ENCODE measurements at regions of chr15 and their contacts with region 1.

Region 1: GRCh38 chr15:40506964-40507571 is 36.3 kb downstream of the CHST14 start:
- DNase-seq: peak; percentile 70
- ATAC-seq: peak; percentile 41
- H3K4me3 ChIP-seq: peak overlapping the region in 3 of 5 experiments; percentile 25 to 34 (median 34)
- H3K4me3 Mint-ChIP-seq: peak overlapping the region; percentile 44
- H3K27ac ChIP-seq: no peak overlapping the region
- H3K27ac Mint-ChIP-seq: no peak overlapping the region
- H3K4me1 ChIP-seq: peaks cover 24 to 25% of the 10 kb centered on the region in 2 donors
- H3K4me1 Mint-ChIP-seq: peaks cover 27% of the 10 kb centered on the region
- H3K27me3 ChIP-seq: peaks cover 0 to 20% (median 10%) of the 10 kb centered on the region in 4 experiments
- H3K27me3 Mint-ChIP-seq: peaks cover 39% of the 10 kb centered on the region
- CTCF ChIP-seq: peak; percentile 68

Region 2: GRCh38 chr15:40470423-40471104 is 36.5 kb before region 1 on chr15 and contains the start of gene CHST14:
- CTCF ChIA-PET with region 1: no interaction called
- POLR2A ChIA-PET with region 1: no interaction called
- intact Hi-C with region 1: loop called (anchors 2 kb)
- DNase-seq: peak; percentile 69
- ATAC-seq: peak; percentile 87
- H3K4me3 ChIP-seq: peak within 1 kb of the TSS; percentile 53 to 84 (median 79)
- H3K4me3 Mint-ChIP-seq: peak within 1 kb of the TSS; percentile 94
- H3K27ac ChIP-seq: peak within 1 kb of the TSS; percentile 73 to 76
- H3K27ac Mint-ChIP-seq: peak within 1 kb of the TSS; percentile 95
- H3K4me1 ChIP-seq: peaks cover 6 to 18% of the 10 kb centered on the region in 2 donors
- H3K4me1 Mint-ChIP-seq: peaks cover 15% of the 10 kb centered on the region
- H3K27me3 ChIP-seq: no peaks in the 10 kb centered on the region
- H3K27me3 Mint-ChIP-seq: no peaks in the 10 kb centered on the region
- CTCF ChIP-seq: no peak
- total RNA-seq, gene CHST14: 14.7 and 16.7 TPM in 2 replicates

Measured in B cell (primary cell).